CD4-positive, alpha-beta T cell (primary cell): ENCODE measurements at regions of chr11 and their contacts with region 1.

Region 1: GRCh38 chr11:129750349-129751292 is 65.0 kb upstream of the TMEM45B start:
- DNase-seq: peak; percentile 62 to 93 (median 75)
- ATAC-seq: peak; percentile 92
- H3K4me3 ChIP-seq: peak overlapping the region; percentile 31
- H3K4me3 Mint-ChIP-seq: peak overlapping the region; percentile 15
- H3K27ac ChIP-seq: no peak overlapping the region
- H3K27ac Mint-ChIP-seq: no peak overlapping the region
- H3K4me1 ChIP-seq: peaks cover 7% of the 10 kb centered on the region
- H3K4me1 Mint-ChIP-seq: peaks cover 4% of the 10 kb centered on the region
- H3K27me3 ChIP-seq: peaks cover 0 to 2% of the 10 kb centered on the region in 2 experiments
- H3K27me3 Mint-ChIP-seq: peaks cover 25% of the 10 kb centered on the region
- CTCF ChIP-seq: peak; percentile 100

Region 2: DNA sequence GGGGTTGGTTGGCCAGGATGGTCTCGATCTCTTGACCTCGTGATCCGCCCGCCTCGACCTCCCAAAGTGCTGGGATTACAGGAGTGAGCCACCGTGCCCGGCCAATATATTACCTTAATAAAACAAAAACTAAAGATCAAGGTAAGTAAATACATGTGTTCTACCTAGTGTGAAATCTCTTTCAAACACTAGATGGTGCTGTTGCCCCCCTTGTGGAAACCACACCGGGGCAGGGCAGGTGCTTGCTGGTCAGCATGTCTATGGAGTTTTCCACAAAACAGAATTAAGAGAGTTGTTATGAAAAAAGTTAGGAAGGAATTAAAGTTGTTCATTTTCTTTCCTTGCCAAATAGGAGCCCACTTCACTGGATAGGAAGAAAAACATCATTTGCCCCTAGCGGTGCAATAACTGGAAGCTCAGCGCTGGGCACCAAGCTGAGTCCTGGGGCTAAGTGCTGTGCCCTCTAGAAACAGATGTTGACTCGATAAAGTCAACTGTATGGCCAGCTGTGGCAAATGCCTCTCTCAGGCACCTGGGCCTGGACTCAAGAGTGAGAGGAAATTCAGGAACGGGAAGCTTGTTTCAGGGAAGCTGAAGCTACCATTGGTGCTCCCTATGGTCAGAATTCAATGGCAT is 865.8 kb before region 1 on chr11:
- CTCF ChIA-PET with region 1: no interaction called
- POLR2A ChIA-PET with region 1: no interaction called
- intact Hi-C with region 1: loop called (anchors 5 kb)
- DNase-seq: peak; percentile 27 to 80 (median 40)
- ATAC-seq: peak; percentile 81
- H3K4me3 ChIP-seq: no peak overlapping the region
- H3K4me3 Mint-ChIP-seq: no peak overlapping the region
- H3K27ac ChIP-seq: no peak overlapping the region
- H3K27ac Mint-ChIP-seq: no peak overlapping the region
- H3K4me1 ChIP-seq: no peaks in the 10 kb centered on the region
- H3K4me1 Mint-ChIP-seq: peaks cover 4% of the 10 kb centered on the region
- H3K27me3 ChIP-seq: peaks cover 32 to 50% of the 10 kb centered on the region in 2 experiments
- H3K27me3 Mint-ChIP-seq: peaks cover 81% of the 10 kb centered on the region
- CTCF ChIP-seq: peak; percentile 80

Region 3: GRCh38 chr11:129117595-129118350 is 632.8 kb before region 1 on chr11:
- CTCF ChIA-PET with region 1: no interaction called
- POLR2A ChIA-PET with region 1: no interaction called
- intact Hi-C with region 1: loop called (anchors 1 to 2 kb)
- DNase-seq: peak in 12 of 14 experiments; percentile 12 to 76 (median 26)
- ATAC-seq: no peak
- H3K4me3 ChIP-seq: no peak overlapping the region
- H3K4me3 Mint-ChIP-seq: no peak overlapping the region
- H3K27ac ChIP-seq: no peak overlapping the region
- H3K27ac Mint-ChIP-seq: no peak overlapping the region
- H3K4me1 ChIP-seq: no peaks in the 10 kb centered on the region
- H3K4me1 Mint-ChIP-seq: no peaks in the 10 kb centered on the region
- H3K27me3 ChIP-seq: no peaks in the 10 kb centered on the region
- H3K27me3 Mint-ChIP-seq: no peaks in the 10 kb centered on the region
- CTCF ChIP-seq: peak; percentile 83

Region 4: DNA sequence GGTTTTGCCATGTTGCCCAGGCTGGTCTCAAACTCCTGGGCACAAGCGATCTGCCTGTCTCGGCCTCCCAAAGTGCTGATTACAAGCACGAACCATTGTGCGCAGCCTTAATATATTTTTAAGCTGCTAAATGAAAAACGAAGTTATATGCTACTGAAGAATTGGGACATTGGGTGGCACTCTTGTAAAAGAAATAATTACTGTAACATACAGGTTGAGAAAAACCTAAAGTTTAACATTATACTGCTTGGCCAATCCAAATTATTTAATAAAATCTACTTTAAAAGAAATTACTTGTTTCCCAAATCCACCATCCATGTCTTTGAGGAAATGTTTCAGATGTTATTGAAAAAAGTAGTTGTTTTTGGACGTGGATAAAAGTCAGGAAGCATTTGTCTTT is 520.6 kb before region 1 on chr11:
- CTCF ChIA-PET with region 1: no interaction called
- POLR2A ChIA-PET with region 1: no interaction called
- intact Hi-C with region 1: loop called (anchors 1 to 5 kb)
- DNase-seq: peak in 3 of 14 experiments; percentile 13 to 26 (median 19)
- ATAC-seq: no peak
- H3K4me3 ChIP-seq: no peak overlapping the region
- H3K4me3 Mint-ChIP-seq: no peak overlapping the region
- H3K27ac ChIP-seq: no peak overlapping the region
- H3K27ac Mint-ChIP-seq: no peak overlapping the region
- H3K4me1 ChIP-seq: no peaks in the 10 kb centered on the region
- H3K4me1 Mint-ChIP-seq: no peaks in the 10 kb centered on the region
- H3K27me3 ChIP-seq: no peaks in the 10 kb centered on the region
- H3K27me3 Mint-ChIP-seq: no peaks in the 10 kb centered on the region
- CTCF ChIP-seq: peak; percentile 28

Region 5: GRCh38 chr11:129364143-129364654 is 386.4 kb before region 1 on chr11:
- CTCF ChIA-PET with region 1: no interaction called
- POLR2A ChIA-PET with region 1: no interaction called
- intact Hi-C with region 1: loop called (anchors 1 kb)
- DNase-seq: peak; percentile 62 to 85 (median 70)
- ATAC-seq: peak; percentile 99
- H3K4me3 ChIP-seq: no peak overlapping the region
- H3K4me3 Mint-ChIP-seq: no peak overlapping the region
- H3K27ac ChIP-seq: no peak overlapping the region
- H3K27ac Mint-ChIP-seq: no peak overlapping the region
- H3K4me1 ChIP-seq: peaks cover 5% of the 10 kb centered on the region
- H3K4me1 Mint-ChIP-seq: no peaks in the 10 kb centered on the region
- H3K27me3 ChIP-seq: peaks cover 13 to 60% of the 10 kb centered on the region in 2 experiments
- H3K27me3 Mint-ChIP-seq: peaks cover 40% of the 10 kb centered on the region
- CTCF ChIP-seq: peak; percentile 99

Region 6: GRCh38 chr11:129695575-129696308 is 54.9 kb before region 1 on chr11:
- CTCF ChIA-PET with region 1: no interaction called
- POLR2A ChIA-PET with region 1: interaction called, 3 read pairs
- intact Hi-C with region 1: loop called in 1 of 2 experiments (anchors 2 kb)
- DNase-seq: peak; percentile 39 to 75 (median 56)
- ATAC-seq: peak; percentile 94
- H3K4me3 ChIP-seq: peak overlapping the region; percentile 56
- H3K4me3 Mint-ChIP-seq: peak overlapping the region; percentile 81
- H3K27ac ChIP-seq: no peak overlapping the region
- H3K27ac Mint-ChIP-seq: no peak overlapping the region
- H3K4me1 ChIP-seq: peaks cover 10% of the 10 kb centered on the region
- H3K4me1 Mint-ChIP-seq: peaks cover 8% of the 10 kb centered on the region
- H3K27me3 ChIP-seq: no peaks in the 10 kb centered on the region
- H3K27me3 Mint-ChIP-seq: peaks cover 35% of the 10 kb centered on the region
- CTCF ChIP-seq: peak; percentile 59